ENCODE measurements at regions of chr20 and their contacts with region 1.

Region 1: DNA sequence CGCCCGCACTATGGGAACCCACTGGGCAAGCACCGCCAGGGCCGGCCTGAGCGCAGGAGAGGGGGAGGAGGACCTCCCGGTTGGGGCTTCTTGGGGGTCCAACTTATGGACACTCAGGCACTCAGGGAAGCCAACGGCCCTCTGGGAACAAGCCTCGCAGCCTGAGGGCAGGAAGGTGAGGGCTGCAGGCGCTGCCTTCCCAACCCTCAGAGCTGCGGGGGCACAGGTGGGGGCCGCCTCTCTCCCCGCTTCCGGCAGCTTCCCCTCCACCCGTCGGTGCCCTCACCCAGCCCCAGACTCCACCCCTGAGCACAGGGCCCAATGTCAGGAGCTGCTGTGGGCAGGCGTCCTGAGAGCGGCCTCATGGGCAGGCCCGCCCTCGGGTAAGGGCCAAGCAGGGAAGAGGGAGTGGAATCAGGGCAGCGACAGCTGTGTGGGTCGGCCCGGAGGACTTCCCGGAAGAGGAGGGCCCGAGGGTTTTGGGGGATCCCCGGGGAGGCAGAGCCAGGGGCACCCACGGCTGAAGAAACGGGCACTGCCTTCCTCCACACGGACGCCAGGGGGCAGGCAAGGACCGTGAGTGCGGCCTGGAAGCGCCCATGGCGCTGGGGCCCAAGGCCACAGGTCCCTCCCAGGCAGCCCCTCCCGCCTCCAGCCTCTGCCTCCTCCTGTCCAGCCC is 488 bp upstream of the PTK6 start:
- DNase-seq: peak; percentile 51
- H3K4me3 ChIP-seq: peak overlapping the region; percentile 44
- CTCF ChIP-seq: peak; percentile 99

Region 2: GRCh38 chr20:63377256-63377941 is 160.3 kb before region 1 on chr20:
- CTCF ChIA-PET with region 1: no interaction called
- POLR2A ChIA-PET with region 1: no interaction called
- DNase-seq: no peak
- H3K4me3 ChIP-seq: no peak overlapping the region
- CTCF ChIP-seq: no peak

Region 3: GRCh38 chr20:63495741-63496595 is 41.7 kb before region 1 on chr20:
- CTCF ChIA-PET with region 1: interaction called, 16 read pairs
- POLR2A ChIA-PET with region 1: no interaction called
- DNase-seq: no peak
- H3K4me3 ChIP-seq: peak overlapping the region; percentile 23
- CTCF ChIP-seq: peak; percentile 95

Region 4: DNA sequence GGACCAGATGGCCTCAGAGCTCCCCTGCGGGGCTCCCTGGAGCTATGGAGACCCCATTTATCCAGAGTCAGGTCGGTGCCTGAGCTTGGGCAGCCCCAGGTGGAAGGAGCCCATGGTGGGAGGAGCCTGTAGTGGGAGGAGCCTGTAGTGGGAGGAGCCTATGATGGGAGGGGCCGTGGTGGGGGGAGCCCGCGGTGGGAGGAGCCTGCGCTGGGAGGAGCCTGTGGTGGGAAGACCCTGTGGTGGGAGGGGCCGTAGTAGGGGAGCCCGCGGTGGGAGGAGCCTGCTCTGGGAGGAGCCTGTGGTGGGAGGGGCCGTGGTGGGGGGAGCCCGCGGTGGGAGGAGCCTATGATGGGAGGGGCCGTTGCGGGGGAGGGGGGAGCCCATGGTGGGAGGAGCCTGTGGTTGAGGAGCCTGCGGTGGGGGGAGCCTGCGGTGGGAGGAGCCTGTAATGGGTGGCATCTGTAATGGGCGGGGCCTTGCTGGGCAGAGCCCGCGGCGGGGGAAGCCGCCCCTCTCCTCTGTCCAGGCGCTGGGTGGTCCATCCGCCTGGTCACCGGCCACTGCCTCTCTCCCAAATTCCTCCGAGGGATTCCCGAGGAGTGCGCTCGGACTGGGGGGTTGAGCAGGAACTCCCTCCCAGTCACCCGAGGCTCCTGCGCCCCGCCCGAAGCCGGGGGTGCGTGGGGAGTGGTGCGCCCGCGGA is 15.7 kb after region 1 on chr20:
- CTCF ChIA-PET with region 1: interaction called, 28 read pairs
- POLR2A ChIA-PET with region 1: no interaction called
- DNase-seq: peak; percentile 7
- H3K4me3 ChIP-seq: peak overlapping the region; percentile 61
- CTCF ChIP-seq: no peak

Region 5: DNA sequence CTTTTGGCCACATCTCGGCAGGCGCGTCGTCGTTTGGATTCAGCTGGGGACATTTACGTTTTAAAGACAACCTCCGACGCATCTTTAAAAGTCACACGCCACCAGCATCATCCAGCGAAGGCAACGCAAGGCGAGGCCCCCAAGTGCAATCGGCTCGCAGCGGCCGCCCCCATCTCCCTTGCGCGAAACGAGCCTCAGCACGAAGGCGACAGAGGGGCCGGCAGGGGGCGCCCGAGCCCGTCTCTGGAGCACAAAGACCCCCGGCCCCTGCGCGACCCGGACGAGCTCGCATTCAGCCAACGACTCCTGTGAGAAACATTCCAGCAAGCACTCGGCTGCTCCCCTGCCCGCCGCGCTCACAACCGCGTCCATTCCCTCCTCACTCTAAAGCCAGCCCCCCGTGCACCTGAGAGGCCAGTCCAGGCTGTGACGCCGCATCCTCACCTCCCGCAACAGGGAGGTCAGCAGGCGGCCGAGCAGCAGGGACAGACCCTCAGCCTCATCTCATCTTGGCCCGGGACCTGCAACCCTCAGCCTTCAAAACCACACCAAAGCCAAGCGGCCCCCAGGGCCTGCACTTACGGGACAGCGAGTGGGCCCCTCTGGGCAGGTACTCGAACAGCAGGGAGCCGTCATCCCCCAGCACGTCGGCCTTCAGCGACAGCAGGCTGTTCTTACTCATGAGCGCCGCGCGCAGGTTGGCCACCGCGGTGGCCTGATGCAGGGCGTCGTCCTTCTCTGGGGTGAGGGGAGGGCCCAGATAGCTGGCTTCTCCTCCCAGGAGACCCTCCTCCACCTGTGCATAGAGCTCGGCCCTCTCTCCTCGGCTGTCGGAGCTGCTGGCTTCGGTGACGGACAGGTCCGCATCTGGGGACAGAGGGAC is 237.7 kb after region 1 on chr20:
- CTCF ChIA-PET with region 1: interaction called, 12 read pairs
- POLR2A ChIA-PET with region 1: no interaction called
- DNase-seq: no peak
- H3K4me3 ChIP-seq: peak overlapping the region; percentile 37
- CTCF ChIP-seq: peak; percentile 91

Region 6: GRCh38 chr20:63973636-63974402 is 436.2 kb after region 1 on chr20:
- CTCF ChIA-PET with region 1: interaction called, 73 read pairs
- POLR2A ChIA-PET with region 1: no interaction called
- DNase-seq: no peak
- H3K4me3 ChIP-seq: peak overlapping the region; percentile 57
- CTCF ChIP-seq: peak; percentile 97

Region 7: GRCh38 chr20:64119681-64120341 is 582.1 kb after region 1 on chr20:
- CTCF ChIA-PET with region 1: interaction called, 27 read pairs
- POLR2A ChIA-PET with region 1: no interaction called
- DNase-seq: no peak
- H3K4me3 ChIP-seq: no peak overlapping the region
- CTCF ChIP-seq: no peak

Measured in AG04449 (cell line).